Right ventricle myocardium inferior (tissue), 1 donor: ENCODE measurements at regions of chr1 and their contacts with region 1.

Region 1: GRCh38 chr1:30525971-30526651 is 197.3 kb downstream of the MATN1 start:
- DNase-seq: no peak
- ATAC-seq: peak; percentile 6

Region 2: GRCh38 chr1:30637183-30637980 is 111.3 kb after region 1 on chr1:
- intact Hi-C with region 1: loop called (anchors 10 kb)
- DNase-seq: no peak
- ATAC-seq: peak; percentile 39